Right lobe of liver (tissue), 6 donors: ENCODE measurements at regions of chr1 and their contacts with region 1.

Region 1: DNA sequence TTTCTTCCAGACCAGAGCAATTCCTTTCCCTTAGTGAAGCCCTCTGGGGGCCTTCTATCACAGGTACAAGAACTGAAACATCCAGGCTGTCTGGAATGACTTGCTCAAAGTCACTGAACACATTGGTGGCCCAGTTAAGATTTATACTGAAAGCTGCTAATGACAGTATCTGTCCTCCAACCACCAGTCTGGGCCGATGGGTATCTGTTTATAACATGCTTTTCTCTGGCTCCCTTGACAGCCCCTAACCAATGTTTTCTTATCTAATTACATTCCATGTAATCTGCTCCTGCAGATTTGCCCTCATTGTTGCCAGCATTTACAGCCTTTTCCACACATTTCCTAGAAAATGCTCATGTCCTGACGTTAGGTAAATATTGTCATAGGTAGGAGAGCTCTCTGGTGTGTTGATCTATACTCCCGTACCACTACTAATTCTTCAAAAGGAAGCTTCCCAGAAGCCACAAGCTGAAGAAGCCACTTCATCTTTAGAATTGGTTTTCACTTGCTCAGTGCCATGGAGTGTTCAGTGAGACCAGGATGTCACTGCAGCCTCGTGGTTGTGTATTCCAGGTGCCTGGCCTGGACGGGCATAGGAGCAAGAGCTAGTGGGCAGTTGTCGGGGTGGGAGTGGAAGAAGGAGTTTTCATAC is 163.9 kb downstream of the TSEN15 start:
- DNase-seq: no peak
- ATAC-seq: peak in 2 of 4 donors; percentile 25 to 36
- H3K4me3 ChIP-seq: no peak overlapping the region
- H3K27ac ChIP-seq: no peak overlapping the region
- H3K4me1 ChIP-seq: no peaks in the 10 kb centered on the region
- H3K27me3 ChIP-seq: no peaks in the 10 kb centered on the region
- CTCF ChIP-seq: no peak
- POLR2A ChIP-seq: no peak

Region 2: DNA sequence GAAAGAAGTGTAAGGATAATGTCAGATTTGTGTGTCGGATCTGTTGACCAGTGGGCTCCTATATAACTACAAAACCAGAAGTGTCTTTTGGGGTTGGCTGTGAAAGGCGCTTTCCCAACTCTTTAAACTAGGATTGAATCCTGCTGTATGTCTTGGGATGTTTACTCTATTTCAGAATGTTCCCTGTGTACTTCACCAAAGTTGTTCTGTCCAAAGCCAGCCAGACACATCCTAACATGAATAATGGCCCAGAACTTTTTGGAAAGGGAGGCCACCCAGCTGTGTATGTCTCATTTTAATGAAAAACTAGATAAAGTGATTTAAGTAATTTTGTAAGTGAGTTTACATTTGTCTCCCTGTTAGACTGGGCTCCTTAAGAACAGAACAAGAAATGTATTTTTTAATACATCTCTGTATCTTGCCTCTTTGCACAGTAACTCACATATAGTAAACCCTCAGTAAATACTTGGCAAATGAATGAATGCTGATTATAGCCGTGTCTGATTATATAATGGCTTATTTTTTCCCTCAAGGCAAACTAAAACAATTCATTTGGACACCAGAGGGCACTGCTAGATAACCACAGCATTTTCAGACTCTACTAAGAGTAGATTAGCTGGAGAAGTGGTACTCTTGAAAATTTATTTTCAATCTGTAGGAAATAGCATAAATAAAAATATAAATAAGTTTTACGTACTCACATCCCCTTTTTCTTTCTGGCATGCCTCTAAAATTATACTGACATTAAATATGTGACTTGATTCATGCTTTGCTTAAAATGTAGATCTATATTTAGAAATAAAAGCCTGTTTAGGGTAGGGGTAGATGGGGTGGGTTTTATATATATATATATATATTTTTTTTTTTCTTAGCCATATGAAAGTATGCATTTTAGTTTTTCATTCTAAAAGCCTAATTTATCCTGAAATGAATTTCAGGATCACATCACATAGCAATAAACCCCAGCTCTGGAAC is 140.1 kb before region 1 on chr1:
- intact Hi-C with region 1: loop called (anchors 5 to 10 kb)
- DNase-seq: no peak
- ATAC-seq: peak; percentile 84 to 95 (median 88)
- H3K4me3 ChIP-seq: no peak overlapping the region
- H3K27ac ChIP-seq: no peak overlapping the region
- H3K4me1 ChIP-seq: no peaks in the 10 kb centered on the region
- H3K27me3 ChIP-seq: no peaks in the 10 kb centered on the region
- CTCF ChIP-seq: peak; percentile 71 to 76 (median 74)
- POLR2A ChIP-seq: no peak

Region 3: DNA sequence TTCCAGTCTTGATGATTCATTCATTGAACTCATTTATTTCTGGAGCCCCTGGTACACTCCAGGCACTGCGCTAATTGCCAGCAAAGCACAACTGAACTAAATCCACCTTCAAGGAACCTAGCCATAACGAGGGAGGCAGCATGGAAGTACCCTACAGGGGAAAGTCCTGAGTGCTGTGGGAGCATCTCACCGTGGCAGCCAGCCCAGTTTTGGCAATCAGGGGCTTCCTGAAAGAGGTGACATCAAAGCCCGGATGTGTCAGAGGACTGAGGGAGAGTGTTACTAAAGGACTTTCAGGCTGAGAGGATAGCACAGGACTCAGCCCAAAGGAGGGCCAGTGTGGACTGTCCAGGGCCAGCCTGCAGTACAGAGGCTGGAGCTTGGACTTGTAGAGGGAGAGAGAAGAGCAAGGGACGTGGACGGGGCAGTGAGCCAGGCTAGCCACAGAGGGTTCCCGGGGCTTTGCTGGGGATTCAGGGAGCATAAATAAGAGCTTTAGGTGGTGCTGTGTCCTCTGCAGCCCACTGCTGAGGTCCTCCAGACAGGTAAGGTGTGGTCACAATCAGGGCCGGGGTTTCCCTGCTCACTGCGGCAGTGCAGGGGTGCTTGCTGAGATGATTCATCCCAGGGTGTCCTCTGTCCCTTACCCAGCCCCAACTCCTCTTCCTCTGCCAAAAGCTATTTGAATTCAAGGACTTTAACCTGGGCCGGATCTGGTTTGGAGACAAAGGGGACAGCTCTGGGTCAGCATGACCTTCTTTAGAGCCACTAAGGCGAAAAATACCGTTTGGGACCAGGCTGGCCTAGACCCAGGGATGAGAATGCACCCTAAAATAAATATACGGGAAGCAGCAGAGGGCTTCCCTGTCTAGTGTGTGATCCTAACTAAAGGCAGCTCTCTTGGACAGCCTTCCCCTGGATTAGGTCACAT is 410.9 kb after region 1 on chr1:
- intact Hi-C with region 1: no loop called
- DNase-seq: peak; percentile 71 to 92 (median 80)
- ATAC-seq: peak; percentile 80 to 91 (median 85)
- H3K4me3 ChIP-seq: peak overlapping the region in 2 of 3 donors; percentile 27 to 53
- H3K27ac ChIP-seq: peak overlapping the region; percentile 63 to 85 (median 80)
- H3K4me1 ChIP-seq: peaks cover 0 to 64% (median 27%) of the 10 kb centered on the region in 4 donors
- H3K27me3 ChIP-seq: no peaks in the 10 kb centered on the region
- CTCF ChIP-seq: no peak
- POLR2A ChIP-seq: peak; percentile 6